Head of caudate nucleus (tissue), 42 donors: ENCODE measurements at regions of chr6 and their contacts with region 1.

Region 1: DNA sequence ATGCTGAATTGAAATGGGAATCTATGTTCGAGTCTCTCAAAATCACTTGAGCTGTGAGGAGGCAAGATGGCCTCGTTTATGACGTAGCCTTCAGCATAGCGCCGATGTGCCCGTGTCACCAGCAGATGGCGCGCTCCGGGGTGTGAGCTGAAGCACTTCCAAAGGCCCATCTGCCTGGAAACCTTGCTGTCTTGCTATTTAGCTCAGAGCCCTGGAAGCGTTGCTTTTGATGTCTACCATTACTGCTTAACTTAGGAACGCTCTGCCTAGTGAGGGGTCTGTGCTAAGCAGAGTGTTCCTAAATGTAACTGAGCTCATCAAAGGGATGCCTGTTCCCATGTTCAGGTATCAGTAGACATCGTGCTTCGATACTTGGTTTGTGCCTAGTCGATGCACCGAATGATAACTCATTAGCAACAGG is 67.7 kb downstream of the SYCP2L start:
- DNase-seq: peak; percentile 10 to 86 (median 64)

Region 2: DNA sequence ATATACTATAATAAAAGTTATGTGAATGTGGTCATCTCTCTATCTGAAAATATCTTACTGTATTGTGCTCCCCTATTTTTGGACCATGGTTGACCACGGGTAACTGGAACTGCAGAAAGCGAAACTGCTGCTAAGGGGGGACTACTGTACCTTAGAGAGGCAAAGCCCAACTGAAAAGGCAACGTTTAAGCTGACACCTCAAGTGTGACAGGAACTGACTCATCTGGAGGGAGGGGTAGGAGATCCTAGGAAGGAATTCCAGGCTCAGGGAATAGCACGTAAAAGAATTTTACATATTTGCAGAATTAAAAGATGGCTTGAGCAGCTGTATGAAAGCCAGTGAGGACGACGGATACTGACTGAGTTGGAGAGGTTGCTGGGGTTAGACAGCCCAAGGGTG is 54.8 kb after region 1 on chr6:
- intact Hi-C with region 1: no loop called
- DNase-seq: peak in 1 of 42 donors; percentile 15

Region 3: DNA sequence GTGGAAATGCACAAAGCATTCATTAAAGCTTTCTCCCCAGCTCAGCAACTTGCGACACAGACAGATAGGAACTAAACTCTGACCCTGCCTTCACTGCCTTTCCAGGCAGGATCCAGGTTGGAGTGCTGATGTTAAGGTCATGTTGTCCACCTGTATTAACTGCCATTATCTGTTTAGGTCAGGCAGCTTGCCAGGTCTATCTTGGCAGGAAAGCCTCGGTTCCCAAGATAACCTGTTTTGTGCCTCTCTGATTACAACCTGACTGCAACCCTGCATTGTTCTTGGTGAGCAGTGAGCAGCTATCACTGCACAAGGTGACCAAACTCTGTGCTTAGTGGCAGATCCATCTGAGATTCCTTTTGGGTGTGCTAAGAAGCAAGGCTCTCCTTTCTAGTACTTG is 112.7 kb after region 1 on chr6:
- intact Hi-C with region 1: loop called (anchors 2 kb)
- DNase-seq: no peak

Region 4: GRCh38 chr6:11232193-11232769 is 277.7 kb after region 1 on chr6 and contains the start of gene NEDD9:
- intact Hi-C with region 1: no loop called
- DNase-seq: peak; percentile 77 to 96 (median 92)